Calu3 (cell line): ENCODE measurements at regions of chr1 and their contacts with region 1.

Region 1: GRCh38 chr1:185439727-185440415 is 122.8 kb upstream of the IVNS1ABP start:
- DNase-seq: peak; percentile 61
- H3K4me3 Mint-ChIP-seq: no peak overlapping the region
- H3K27ac Mint-ChIP-seq: no peak overlapping the region
- H3K4me1 Mint-ChIP-seq: no peaks in the 10 kb centered on the region
- H3K27me3 Mint-ChIP-seq: no peaks in the 10 kb centered on the region
- CTCF ChIP-seq: no peak

Region 2: DNA sequence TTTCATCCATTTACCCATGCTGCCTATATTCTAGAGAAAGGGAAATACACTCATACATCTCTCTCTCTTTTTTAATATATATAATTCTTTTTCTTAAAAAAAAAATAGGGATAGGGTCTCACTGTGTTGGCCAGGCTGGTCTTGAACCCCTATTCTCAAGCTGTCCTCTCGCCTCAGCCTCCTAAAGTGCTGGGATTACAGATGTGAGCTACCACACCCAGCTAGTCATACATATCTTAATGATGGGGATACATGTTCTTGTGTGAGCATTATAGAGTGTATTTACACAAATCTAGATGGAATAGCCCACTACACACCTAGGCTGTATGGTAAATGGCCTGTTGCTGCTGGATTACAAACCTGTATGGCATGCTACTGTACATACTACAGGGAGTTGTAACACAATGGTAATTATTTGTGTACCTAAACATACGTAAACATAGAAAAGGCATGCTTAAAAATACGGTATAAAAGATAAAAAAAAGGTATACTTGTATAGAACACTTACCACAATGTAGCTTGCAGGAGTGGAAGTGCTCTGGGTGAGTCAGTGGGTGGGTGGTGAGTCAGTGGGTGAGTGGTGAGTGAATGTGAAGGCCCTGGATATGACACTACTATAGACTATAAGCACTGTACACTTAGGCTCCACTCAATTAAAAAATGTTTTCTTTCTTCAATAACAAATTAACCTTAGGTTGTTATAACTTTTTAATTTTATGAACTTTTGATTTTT is 195.7 kb before region 1 on chr1:
- CTCF ChIA-PET with region 1: no interaction called
- intact Hi-C with region 1: no loop called
- DNase-seq: peak; percentile 3
- H3K4me3 Mint-ChIP-seq: no peak overlapping the region
- H3K27ac Mint-ChIP-seq: no peak overlapping the region
- H3K4me1 Mint-ChIP-seq: no peaks in the 10 kb centered on the region
- H3K27me3 Mint-ChIP-seq: no peaks in the 10 kb centered on the region
- CTCF ChIP-seq: no peak

Region 3: DNA sequence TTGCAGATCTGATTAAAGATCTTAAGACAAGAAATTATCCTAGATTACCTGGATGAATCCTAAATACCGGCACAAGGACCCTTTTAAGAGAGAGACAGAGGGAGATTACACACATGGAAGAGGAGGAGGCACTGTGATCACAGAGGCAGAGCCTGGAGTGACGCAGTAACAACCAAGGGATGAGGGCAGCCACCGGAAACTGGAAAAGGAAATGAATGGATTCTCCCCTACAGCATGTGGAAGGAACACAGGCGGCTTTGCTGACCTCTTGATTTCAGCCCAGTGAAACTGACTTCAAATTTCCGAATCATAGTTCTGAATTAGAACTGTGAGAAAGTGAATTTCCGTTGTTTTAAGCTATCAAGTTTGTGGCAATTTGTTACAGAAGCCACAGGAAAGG is 72.7 kb before region 1 on chr1:
- CTCF ChIA-PET with region 1: no interaction called
- intact Hi-C with region 1: loop called (anchors 5 kb)
- DNase-seq: no peak
- H3K4me3 Mint-ChIP-seq: no peak overlapping the region
- H3K27ac Mint-ChIP-seq: peak overlapping the region; percentile 37
- H3K4me1 Mint-ChIP-seq: peaks cover 34% of the 10 kb centered on the region
- H3K27me3 Mint-ChIP-seq: no peaks in the 10 kb centered on the region
- CTCF ChIP-seq: no peak

Region 4: DNA sequence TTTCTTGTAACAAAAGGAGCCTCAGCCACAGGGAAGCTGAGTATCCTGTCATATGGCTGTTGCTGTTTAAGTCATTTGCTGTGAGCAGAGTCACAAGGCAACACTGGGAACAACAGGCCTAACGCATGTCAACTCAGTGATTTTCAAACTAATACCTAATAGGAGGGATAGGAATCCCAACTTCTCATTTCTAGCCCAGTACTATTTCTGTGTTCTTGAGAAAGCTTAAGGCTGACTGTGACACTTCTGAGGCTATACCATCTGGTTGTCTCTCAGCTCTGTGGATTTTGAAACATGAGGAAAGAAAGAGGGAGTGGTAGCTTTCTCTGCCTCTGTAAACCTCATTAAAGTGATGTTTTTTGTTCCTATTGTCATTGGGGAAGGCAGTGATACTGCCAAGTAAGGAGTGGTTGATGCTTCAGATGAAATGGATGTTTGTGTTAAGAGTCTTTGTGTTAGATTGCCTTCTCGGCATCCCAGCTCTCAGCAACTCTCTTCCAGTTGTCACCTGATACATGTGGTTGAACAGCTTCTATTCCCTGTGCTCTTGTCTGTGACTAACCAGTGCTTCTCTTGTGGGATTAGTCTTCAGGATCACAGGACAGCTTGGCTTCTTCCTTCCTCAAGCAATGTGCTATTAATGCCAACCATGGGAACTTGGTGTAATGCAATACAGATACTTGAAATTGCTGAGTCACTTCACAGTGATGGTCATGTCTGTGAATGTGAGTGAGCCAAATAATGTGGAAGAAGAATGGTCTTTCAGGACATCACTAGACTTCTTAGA is 44.0 kb after region 1 on chr1:
- CTCF ChIA-PET with region 1: no interaction called
- intact Hi-C with region 1: no loop called
- DNase-seq: no peak
- H3K4me3 Mint-ChIP-seq: no peak overlapping the region
- H3K27ac Mint-ChIP-seq: no peak overlapping the region
- H3K4me1 Mint-ChIP-seq: peaks cover 18% of the 10 kb centered on the region
- H3K27me3 Mint-ChIP-seq: no peaks in the 10 kb centered on the region
- CTCF ChIP-seq: no peak

Region 5: DNA sequence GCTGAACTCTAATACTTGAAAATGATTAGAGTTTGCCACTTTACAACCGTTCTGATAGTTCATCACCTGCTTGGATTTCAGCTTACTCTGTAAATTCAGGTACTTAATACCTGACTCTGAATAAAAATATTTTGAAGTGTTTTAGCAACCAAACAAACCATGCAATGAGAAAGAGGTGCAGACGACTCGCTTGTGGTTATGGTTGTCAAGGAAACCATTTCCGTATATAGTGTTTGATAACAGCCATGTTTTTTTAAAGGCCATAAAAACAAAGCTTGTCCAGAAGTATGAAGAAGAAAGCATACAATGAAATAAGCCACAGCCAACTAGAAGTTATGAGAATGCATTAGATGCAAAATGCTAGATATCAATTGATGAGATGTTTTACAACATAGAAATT is 127.1 kb after region 1 on chr1:
- CTCF ChIA-PET with region 1: no interaction called
- intact Hi-C with region 1: loop called (anchors 2 kb)
- DNase-seq: peak; percentile 28
- H3K4me3 Mint-ChIP-seq: peak overlapping the region; percentile 14
- H3K27ac Mint-ChIP-seq: peak overlapping the region; percentile 91
- H3K4me1 Mint-ChIP-seq: peaks cover 83% of the 10 kb centered on the region
- H3K27me3 Mint-ChIP-seq: no peaks in the 10 kb centered on the region
- CTCF ChIP-seq: no peak

Region 6: GRCh38 chr1:185670187-185670627 is 230.3 kb after region 1 on chr1:
- CTCF ChIA-PET with region 1: no interaction called
- intact Hi-C with region 1: loop called (anchors 2 kb)
- DNase-seq: peak; percentile 56
- H3K4me3 Mint-ChIP-seq: no peak overlapping the region
- H3K27ac Mint-ChIP-seq: no peak overlapping the region
- H3K4me1 Mint-ChIP-seq: peaks cover 12% of the 10 kb centered on the region
- H3K27me3 Mint-ChIP-seq: no peaks in the 10 kb centered on the region
- CTCF ChIP-seq: peak; percentile 39